Endothelial cell of umbilical vein (primary cell): ENCODE measurements at regions of chr7 and their contacts with region 1.

Region 1: DNA sequence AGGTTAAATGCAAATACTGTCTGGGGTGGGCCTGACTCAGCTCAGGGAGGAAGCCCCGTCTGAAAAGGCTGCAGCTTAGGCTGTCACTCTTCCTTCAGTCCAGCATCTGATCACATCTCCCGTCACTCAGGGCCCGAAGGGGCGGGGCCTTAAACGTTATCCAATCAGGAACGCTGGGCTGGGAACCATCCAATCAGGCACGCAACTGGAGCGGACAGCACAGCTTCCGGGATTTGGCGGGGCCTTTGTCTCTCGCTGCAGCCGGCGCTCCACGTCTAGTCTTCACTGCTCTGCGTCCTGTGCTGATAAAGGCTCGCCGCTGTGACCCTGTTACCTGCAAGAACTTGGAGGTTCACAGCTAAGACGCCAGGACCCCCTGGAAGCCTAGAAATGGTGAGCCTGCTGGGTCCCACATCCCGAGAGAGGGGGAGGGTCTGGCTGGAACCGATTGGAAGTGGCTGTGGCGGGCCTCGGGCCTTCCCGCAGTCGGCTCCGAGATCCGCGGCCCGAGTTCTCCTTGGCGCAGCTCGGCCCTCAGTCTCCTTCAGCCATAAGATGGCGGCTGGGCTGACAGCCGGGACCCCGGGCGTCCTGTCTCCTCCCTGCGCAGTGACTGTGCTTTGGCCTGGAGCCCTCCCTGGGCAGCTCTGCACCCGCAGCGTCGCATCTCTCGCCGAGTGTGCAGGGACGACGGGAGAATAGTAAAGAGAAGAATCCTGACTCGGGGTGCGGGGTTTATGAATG is at the start of gene ZNF92:
- DNase-seq: peak; percentile 99
- H3K4me3 ChIP-seq: peak within 1 kb of the TSS; percentile 84 to 94 (median 87)
- H3K27ac ChIP-seq: peak within 1 kb of the TSS; percentile 85
- H3K4me1 ChIP-seq: peaks cover 8% of the 10 kb centered on the region
- H3K27me3 ChIP-seq: no peaks in the 10 kb centered on the region
- CTCF ChIP-seq: no peak
- POLR2A ChIP-seq: peak; percentile 94
- total RNA-seq, gene ZNF92: 8.9 and 9.2 TPM in 2 replicates

Region 2: DNA sequence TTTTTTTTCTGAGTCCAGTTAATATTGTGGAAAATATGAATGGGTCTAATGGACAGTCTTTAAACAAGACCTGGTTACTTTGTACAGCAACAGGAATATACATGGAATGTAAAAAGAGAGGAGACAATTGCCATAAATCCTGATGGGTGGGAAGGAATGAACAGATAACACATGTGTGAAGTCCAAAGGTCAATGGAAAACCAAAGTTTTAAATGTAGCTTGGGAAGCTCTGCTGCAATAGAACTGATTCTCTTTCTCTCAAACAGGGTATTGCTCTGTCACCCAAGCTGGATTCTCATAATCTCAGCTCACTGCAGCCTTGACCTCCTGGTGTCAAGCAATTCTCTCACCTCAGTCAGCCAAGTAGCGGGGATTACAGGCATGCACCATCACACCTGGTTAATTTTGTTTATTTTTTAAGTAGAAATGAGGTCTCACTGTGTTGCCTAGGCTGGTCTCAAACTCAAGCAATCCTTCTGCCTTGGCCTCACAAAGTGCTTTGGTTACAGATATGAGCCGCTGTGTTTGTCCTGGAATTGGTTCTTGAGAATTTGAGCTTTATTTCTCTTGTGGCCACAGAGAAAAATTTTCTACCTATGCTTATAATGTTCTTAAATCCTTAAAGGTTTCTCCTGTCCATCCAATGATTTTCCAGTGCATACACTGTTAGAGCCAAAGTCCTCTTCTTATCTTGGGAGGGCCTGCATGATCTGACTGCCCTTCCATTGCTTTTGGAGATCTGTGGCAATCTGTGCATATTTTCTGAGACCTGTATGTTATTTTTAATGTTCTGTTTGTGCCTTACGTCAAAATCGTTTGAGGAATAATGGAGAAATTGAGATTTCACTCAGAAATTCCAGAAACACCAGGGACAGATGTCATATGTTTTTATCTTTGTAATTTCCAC is 30.8 kb before region 1 on chr7:
- CTCF ChIA-PET with region 1: no interaction called
- POLR2A ChIA-PET with region 1: no interaction called
- dilution Hi-C with region 1: no loop called
- intact Hi-C with region 1: no loop called
- DNase-seq: no peak
- H3K4me3 ChIP-seq: no peak overlapping the region
- H3K27ac ChIP-seq: no peak overlapping the region
- H3K4me1 ChIP-seq: no peaks in the 10 kb centered on the region
- H3K27me3 ChIP-seq: no peaks in the 10 kb centered on the region
- CTCF ChIP-seq: no peak
- POLR2A ChIP-seq: no peak

Region 3: DNA sequence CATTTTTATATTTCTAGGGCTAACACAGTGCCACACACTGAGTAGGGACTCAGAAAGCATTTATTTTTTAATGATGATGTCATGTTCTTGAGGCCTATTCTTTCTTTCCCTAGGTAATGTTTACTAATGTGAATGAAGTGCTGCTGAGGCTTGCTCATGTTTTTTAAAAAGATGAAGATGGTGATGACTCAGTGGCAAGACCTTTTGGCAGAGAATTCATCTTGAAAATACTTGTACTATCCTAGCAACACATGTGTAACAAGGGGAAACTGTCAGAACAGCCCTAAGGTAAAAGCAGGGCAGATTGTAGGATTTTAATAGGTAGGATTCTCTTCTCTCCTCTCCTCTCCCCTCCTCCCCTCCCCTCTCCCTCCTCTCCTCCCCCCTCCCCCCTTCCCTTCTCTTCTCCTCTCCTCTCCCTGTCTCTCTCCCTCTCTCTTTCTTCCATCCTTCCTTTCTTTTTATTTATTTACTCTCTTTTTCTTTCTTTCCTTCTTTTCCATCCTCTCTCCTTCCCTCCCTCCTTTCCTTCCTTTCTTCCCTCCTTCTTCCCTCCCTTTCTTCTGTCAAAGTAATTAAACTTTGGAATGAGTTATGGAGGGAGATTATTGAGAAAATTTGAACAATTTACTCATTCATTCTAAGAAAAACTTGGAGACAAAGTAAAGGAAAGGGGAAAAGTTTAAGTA is 75.2 kb after region 1 on chr7:
- CTCF ChIA-PET with region 1: no interaction called
- POLR2A ChIA-PET with region 1: no interaction called
- dilution Hi-C with region 1: no loop called
- intact Hi-C with region 1: loop called (anchors 2 kb)
- DNase-seq: peak; percentile 31
- H3K4me3 ChIP-seq: no peak overlapping the region
- H3K27ac ChIP-seq: no peak overlapping the region
- H3K4me1 ChIP-seq: peaks cover 8% of the 10 kb centered on the region
- H3K27me3 ChIP-seq: no peaks in the 10 kb centered on the region
- CTCF ChIP-seq: no peak
- POLR2A ChIP-seq: no peak

Region 4: GRCh38 chr7:65463184-65463583 is 89.4 kb after region 1 on chr7:
- CTCF ChIA-PET with region 1: no interaction called
- POLR2A ChIA-PET with region 1: no interaction called
- dilution Hi-C with region 1: no loop called
- intact Hi-C with region 1: no loop called
- DNase-seq: no peak
- H3K4me3 ChIP-seq: no peak overlapping the region
- H3K27ac ChIP-seq: no peak overlapping the region
- H3K4me1 ChIP-seq: no peaks in the 10 kb centered on the region
- H3K27me3 ChIP-seq: no peaks in the 10 kb centered on the region
- CTCF ChIP-seq: no peak
- POLR2A ChIP-seq: no peak